WTC11 (cell line): ENCODE measurements at regions of chr21 and their contacts with region 1.

Region 1: GRCh38 chr21:18041012-18041411 is 203.6 kb upstream of the CHODL start:
- DNase-seq: peak; percentile 15
- ATAC-seq: peak; percentile 92
- H3K4me3 Mint-ChIP-seq: no peak overlapping the region
- H3K27ac Mint-ChIP-seq: 0 out of 2 replicates have a peak overlapping the region, but pooled peaks have one; percentile 28
- H3K4me1 Mint-ChIP-seq: no peaks in the 10 kb centered on the region
- H3K27me3 Mint-ChIP-seq: no peaks in the 10 kb centered on the region
- CTCF ChIP-seq: no peak

Region 2: GRCh38 chr21:17925000-17925610 is 115.9 kb before region 1 on chr21:
- CTCF ChIA-PET with region 1: interaction called, 12 read pairs
- POLR2A ChIA-PET with region 1: no interaction called
- DNase-seq: peak; percentile 53
- ATAC-seq: peak; percentile 99
- H3K4me3 Mint-ChIP-seq: no peak overlapping the region
- H3K27ac Mint-ChIP-seq: no peak overlapping the region
- H3K4me1 Mint-ChIP-seq: peaks cover 23% of the 10 kb centered on the region
- H3K27me3 Mint-ChIP-seq: no peaks in the 10 kb centered on the region
- CTCF ChIP-seq: peak; percentile 78

Region 3: DNA sequence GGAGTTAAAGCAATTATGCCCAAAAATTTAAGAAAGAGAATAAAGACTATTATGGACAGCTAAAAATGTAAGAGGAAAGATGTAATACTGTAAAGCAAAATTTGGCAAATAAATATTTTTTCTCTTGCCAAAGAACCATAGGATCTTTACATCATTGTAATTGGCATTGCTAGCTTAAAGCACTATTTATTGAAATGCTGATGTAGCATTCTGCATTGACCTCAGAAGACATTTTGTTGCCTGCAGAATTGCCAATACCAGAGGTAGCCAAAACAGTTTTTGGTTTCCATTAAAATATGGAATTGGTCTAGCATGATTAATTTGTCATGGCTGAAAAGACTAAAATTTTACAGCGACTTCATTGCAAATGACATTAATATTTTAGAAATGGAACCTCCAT is 12.1 kb after region 1 on chr21:
- CTCF ChIA-PET with region 1: interaction called, 17 read pairs
- POLR2A ChIA-PET with region 1: no interaction called
- DNase-seq: no peak
- ATAC-seq: no peak
- H3K4me3 Mint-ChIP-seq: no peak overlapping the region
- H3K27ac Mint-ChIP-seq: no peak overlapping the region
- H3K4me1 Mint-ChIP-seq: peaks cover 9% of the 10 kb centered on the region
- H3K27me3 Mint-ChIP-seq: no peaks in the 10 kb centered on the region
- CTCF ChIP-seq: no peak

Region 4: GRCh38 chr21:18204931-18205330 is 163.9 kb after region 1 on chr21:
- CTCF ChIA-PET with region 1: interaction called, 26 read pairs
- POLR2A ChIA-PET with region 1: no interaction called
- DNase-seq: no peak
- ATAC-seq: peak; percentile 62
- H3K4me3 Mint-ChIP-seq: no peak overlapping the region
- H3K27ac Mint-ChIP-seq: no peak overlapping the region
- H3K4me1 Mint-ChIP-seq: no peaks in the 10 kb centered on the region
- H3K27me3 Mint-ChIP-seq: no peaks in the 10 kb centered on the region
- CTCF ChIP-seq: no peak

Region 5: GRCh38 chr21:18249672-18250071 is 208.7 kb after region 1 on chr21:
- CTCF ChIA-PET with region 1: interaction called, 17 read pairs
- POLR2A ChIA-PET with region 1: no interaction called
- DNase-seq: no peak
- ATAC-seq: peak; percentile 79
- H3K4me3 Mint-ChIP-seq: no peak overlapping the region
- H3K27ac Mint-ChIP-seq: no peak overlapping the region
- H3K4me1 Mint-ChIP-seq: 0 out of 2 replicates have a peak, but pooled peaks cover 2% of the 10 kb centered on the region
- H3K27me3 Mint-ChIP-seq: peaks cover 29% of the 10 kb centered on the region
- CTCF ChIP-seq: no peak